Activated CD8-positive, alpha-beta T cell treated with anti-CD3 and anti-CD28 coated beads, Interleukin-2, amount 10 ng/mL, durations not matched to agents 7 days and 5 days (primary cell): ENCODE measurements at regions of chr15 and their contacts with region 1.

Region 1: DNA sequence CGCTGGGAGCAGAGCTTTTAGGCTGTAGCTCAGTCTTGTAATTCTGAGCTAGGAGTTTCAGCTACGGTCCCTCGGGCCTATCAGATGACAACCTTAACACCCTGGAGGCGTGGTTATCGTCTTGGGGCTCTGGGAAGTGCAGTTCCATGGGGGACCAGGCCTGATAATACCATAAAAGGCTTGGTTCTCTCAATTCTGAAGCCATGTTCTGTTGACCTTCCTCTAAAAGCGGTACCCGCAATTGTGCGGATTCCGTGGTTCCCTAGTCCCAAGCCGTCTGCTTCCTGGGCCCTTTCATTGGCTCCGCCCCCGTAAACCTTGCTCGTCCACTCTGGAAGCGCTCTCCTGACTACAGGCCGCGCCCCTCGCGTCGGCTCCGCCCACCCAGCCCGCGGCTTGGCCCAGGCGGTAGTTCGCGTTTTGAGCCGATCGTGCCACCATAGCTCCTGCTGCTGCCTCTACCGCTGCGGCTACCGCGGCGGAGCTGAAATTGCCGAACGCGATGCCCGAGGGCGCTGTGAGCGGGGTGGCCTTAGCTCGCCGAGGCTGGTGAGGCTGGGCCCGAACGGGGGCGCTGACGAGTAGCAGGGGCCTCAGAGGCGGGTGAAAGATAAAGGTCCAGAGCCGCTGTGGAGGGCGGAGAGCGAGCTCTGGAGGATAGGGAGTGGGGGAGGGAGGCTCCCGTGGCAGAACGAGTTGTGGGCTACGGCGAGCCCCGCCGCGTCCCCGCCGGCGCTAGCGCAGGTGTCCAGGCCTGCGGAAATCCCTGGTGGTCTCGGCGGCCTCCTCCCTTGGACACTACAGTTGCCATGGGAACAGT is at the start of gene MAPKBP1:
- DNase-seq: peak; percentile 99
- ATAC-seq: peak; percentile 92
- H3K4me3 Mint-ChIP-seq: peak within 1 kb of the TSS; percentile 93
- H3K27ac Mint-ChIP-seq: peak within 1 kb of the TSS; percentile 94
- H3K4me1 Mint-ChIP-seq: peaks cover 55% of the 10 kb centered on the region
- H3K27me3 Mint-ChIP-seq: no peaks in the 10 kb centered on the region
- total RNA-seq, gene MAPKBP1: 30.4 to 30.9 TPM

Region 2: DNA sequence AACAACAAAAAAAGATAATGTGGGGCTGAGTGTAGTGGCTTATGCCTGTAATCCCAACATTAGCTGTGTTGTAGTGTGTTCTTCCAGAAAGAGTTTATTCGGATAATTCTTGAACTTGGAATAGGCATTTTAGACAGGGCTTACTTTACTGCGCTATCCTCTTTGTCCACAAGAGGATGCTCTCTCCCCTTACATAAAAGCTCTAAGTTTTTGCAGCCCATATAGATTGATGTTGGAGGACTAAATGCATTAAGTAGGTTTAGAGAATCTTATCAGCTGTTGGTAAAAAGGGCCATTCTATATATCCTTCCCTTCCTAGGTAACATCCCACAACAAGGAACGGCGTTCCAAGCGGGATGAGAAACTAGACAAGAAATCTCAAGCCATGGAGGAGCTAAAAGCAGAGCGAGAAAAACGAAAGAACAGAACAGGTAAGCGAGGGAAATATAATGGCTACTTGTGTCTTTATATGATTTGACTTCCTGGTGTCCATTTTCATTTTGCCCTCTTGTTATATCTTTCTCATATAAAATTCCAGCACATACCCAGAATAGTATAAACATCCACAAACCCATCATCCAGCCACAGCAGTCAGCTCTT is 308.4 kb before region 1 on chr15:
- CTCF ChIA-PET with region 1: interaction called, 28 read pairs
- POLR2A ChIA-PET with region 1: no interaction called
- DNase-seq: peak; percentile 46
- ATAC-seq: peak; percentile 53
- H3K4me3 Mint-ChIP-seq: no peak overlapping the region
- H3K27ac Mint-ChIP-seq: no peak overlapping the region
- H3K4me1 Mint-ChIP-seq: peaks cover 5% of the 10 kb centered on the region
- H3K27me3 Mint-ChIP-seq: no peaks in the 10 kb centered on the region

Region 3: DNA sequence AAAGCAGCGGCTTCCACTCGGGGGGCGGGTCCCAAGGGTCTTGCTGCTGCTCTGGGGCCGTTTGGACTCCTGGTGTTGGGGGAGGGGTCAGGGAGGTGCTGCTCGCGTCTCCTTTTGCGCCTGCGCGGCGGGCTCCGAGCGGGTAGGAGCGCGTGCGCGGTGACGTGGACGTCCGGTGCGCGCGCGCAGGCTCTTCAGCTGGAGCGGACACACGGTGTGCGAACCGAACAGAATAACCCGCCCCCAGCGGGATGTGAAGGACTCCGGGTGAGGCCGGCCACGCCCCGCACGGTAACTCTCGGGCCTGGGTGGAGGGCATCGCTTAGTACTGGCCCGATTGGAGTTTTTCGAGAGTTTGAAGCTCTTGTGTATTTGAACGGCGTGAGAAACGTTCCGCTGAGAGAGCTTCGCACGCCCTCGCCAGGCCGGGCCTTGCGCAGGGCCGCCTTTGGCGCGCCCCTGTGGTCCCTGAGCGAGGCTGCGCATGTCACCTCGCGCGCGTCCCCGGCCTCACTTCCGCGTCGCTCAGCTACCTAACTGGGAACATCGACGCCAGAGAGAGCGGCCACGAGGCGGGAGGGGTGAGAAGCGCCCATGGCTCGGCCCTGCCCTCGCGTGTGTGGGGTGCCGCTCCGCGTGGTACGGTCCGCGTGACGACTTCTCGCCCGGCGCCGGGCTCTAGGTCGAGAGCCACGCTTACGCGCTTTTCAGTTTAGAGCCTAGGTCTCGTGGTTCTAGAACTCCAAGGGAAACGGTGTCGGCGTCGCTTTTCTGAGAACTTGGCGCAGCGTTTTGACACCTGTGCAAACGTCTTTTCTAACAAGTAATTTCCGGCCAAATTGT is 113.8 kb before region 1 on chr15 and contains the start of gene MGA:
- CTCF ChIA-PET with region 1: interaction called, 18 read pairs
- POLR2A ChIA-PET with region 1: interaction called, 3 read pairs
- DNase-seq: peak; percentile 92
- ATAC-seq: peak; percentile 85
- H3K4me3 Mint-ChIP-seq: peak within 1 kb of the TSS; percentile 86
- H3K27ac Mint-ChIP-seq: peak within 1 kb of the TSS; percentile 93
- H3K4me1 Mint-ChIP-seq: peaks cover 34% of the 10 kb centered on the region
- H3K27me3 Mint-ChIP-seq: peaks cover 20% of the 10 kb centered on the region
- total RNA-seq, gene MGA: 36.1 to 37.1 TPM

Region 4: DNA sequence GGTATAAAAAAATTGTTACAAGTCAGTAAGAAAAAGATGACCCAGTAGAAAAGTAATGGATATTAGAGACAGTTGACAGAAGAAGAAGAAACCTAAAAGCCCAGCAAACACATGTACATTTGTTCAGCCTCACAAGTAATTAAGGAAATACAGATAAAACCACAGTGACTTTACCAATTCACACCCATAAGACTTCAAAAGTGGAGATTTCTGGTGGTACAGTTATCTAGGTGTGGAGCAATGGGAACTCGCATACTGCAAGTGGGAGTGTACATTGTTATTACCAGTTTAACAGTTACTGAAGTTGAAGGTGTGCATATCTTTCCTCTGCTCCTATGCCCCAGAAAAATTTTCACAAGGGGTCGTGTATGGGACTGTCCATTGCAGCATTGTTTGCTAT is 18.1 kb before region 1 on chr15:
- CTCF ChIA-PET with region 1: interaction called, 13 read pairs
- POLR2A ChIA-PET with region 1: no interaction called
- DNase-seq: no peak
- ATAC-seq: no peak
- H3K4me3 Mint-ChIP-seq: no peak overlapping the region
- H3K27ac Mint-ChIP-seq: no peak overlapping the region
- H3K4me1 Mint-ChIP-seq: no peaks in the 10 kb centered on the region
- H3K27me3 Mint-ChIP-seq: no peaks in the 10 kb centered on the region

Region 5: DNA sequence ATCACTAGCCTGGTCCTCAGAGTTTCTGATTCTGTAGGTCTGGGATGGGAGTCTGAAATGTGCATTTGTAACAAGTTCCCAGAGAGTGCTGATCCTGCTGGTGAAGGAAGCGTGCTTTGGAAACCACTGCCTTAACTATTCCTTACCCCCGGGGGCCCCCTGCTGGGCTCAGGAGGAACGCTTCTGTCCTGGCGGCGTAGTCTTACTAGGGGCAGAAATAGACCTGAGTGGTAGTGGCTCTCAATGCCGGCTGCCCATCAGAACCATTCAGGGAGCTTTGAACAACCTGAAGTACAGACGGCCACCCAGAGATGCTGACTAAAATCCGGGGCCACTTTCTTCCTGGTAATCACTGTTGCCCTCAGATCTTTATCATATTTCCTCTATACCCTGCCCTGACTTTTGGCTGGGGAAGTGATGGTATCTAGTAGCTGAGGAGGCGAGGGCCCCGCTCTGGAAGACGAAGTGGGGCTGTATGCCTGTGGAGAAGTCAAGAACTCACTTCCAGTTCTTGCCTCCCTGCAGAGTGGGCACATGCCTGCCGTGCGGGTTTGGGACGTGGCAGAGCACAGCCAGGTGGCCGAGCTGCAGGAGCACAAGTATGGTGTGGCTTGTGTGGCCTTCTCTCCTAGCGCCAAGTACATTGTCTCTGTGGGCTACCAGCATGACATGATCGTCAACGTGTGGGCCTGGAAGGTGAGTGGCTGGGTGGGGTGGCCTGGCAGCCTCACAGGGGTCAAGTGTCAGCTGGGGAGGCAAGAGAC is 37.3 kb after region 1 on chr15:
- CTCF ChIA-PET with region 1: interaction called, 333 read pairs
- POLR2A ChIA-PET with region 1: interaction called, 31 read pairs
- DNase-seq: peak; percentile 80
- ATAC-seq: peak; percentile 89
- H3K4me3 Mint-ChIP-seq: no peak overlapping the region
- H3K27ac Mint-ChIP-seq: peak overlapping the region; percentile 69
- H3K4me1 Mint-ChIP-seq: peaks cover 34% of the 10 kb centered on the region
- H3K27me3 Mint-ChIP-seq: no peaks in the 10 kb centered on the region

Region 6: GRCh38 chr15:41849861-41850260 is 75.6 kb after region 1 on chr15:
- CTCF ChIA-PET with region 1: interaction called, 11 read pairs
- POLR2A ChIA-PET with region 1: no interaction called
- DNase-seq: no peak
- ATAC-seq: no peak
- H3K4me3 Mint-ChIP-seq: no peak overlapping the region
- H3K27ac Mint-ChIP-seq: no peak overlapping the region
- H3K4me1 Mint-ChIP-seq: no peaks in the 10 kb centered on the region
- H3K27me3 Mint-ChIP-seq: no peaks in the 10 kb centered on the region

Region 7: DNA sequence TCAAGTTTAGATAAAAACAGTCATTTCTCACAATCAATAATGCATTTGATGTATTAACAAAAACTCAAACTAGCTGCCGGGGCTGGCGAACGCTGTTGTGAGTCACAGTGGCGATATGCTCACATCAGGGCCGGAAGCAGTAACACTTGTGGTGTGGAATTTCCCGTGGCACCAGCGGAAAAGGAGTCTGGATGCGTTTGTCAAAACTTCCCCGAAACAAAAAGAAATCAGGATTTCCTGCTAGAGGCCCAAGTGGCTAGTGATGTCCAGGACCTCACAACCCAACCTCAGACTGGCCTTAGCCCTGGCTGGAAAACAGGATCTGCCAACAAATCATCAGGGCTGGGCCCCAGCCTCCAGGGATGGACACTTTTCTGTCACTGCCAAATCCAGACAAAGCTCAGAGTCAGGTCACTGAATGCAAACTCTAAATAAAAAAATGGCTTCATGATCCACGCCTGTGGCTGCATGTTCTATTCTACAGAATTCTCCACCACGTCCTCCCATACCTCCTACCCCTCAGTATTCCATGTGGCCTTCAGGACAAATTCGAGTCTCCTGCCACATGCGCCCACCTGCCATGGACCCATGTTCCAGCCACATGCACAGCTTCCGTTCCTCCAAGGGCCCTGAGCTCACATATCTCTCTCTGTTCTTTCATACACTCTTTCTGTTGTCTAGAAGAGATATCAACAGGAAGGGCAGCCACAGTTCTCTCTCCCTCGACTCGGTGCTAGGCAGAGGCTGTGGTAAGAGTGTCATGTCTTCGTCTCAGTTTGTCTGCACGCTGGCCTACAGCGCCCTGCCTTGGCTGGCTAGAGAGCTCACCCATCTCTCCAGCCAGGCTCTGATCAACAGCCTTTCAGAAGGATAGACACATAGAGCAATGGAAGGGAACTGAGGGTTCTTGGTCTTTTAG is 162.6 kb after region 1 on chr15:
- CTCF ChIA-PET with region 1: interaction called, 45 read pairs
- POLR2A ChIA-PET with region 1: interaction called, 3 read pairs
- DNase-seq: peak; percentile 83
- ATAC-seq: peak; percentile 85
- H3K4me3 Mint-ChIP-seq: peak overlapping the region; percentile 49
- H3K27ac Mint-ChIP-seq: peak overlapping the region; percentile 95
- H3K4me1 Mint-ChIP-seq: peaks cover 62% of the 10 kb centered on the region
- H3K27me3 Mint-ChIP-seq: no peaks in the 10 kb centered on the region

Region 8: DNA sequence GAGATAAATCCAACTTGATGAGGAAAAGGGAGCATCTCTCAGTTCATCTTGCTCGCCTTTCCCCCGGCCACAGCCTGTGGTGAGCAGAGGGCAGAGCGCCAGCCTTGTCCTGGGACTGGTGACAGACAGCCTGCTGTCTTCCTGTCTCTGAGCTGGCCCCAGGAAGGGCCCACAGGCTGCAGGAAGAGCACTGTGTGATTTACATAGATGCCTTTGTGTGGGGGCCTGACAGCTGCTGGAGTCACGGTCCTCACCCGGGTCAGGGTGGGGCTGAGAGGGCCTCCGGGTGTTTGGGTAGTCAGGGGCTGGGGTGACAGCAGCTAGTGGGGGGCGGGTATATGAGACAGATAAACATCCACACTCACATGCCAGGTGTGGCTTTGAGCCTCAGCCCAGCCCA is 290.8 kb after region 1 on chr15:
- CTCF ChIA-PET with region 1: no interaction called
- POLR2A ChIA-PET with region 1: no interaction called
- DNase-seq: no peak
- ATAC-seq: peak; percentile 54
- H3K4me3 Mint-ChIP-seq: no peak overlapping the region
- H3K27ac Mint-ChIP-seq: no peak overlapping the region
- H3K4me1 Mint-ChIP-seq: peaks cover 6% of the 10 kb centered on the region
- H3K27me3 Mint-ChIP-seq: peaks cover 16% of the 10 kb centered on the region